ENCODE measurements at regions of chr22 and their contacts with region 1.

Region 1: GRCh38 chr22:47547881-47548650 is 785.6 kb downstream of the TBC1D22A start:
- DNase-seq: no peak
- H3K4me3 ChIP-seq: no peak overlapping the region
- H3K27me3 ChIP-seq: no peaks in the 10 kb centered on the region
- CTCF ChIP-seq: no peak

Region 2: GRCh38 chr22:47310601-47311000 is 237.5 kb before region 1 on chr22:
- CTCF ChIA-PET with region 1: no interaction called
- POLR2A ChIA-PET with region 1: interaction called, 10 read pairs
- DNase-seq: no peak
- H3K4me3 ChIP-seq: no peak overlapping the region
- H3K27me3 ChIP-seq: no peaks in the 10 kb centered on the region
- CTCF ChIP-seq: no peak

Measured in BJ (cell line).